A673 (cell line): ENCODE measurements at regions of chr2 and their contacts with region 1.

Region 1: DNA sequence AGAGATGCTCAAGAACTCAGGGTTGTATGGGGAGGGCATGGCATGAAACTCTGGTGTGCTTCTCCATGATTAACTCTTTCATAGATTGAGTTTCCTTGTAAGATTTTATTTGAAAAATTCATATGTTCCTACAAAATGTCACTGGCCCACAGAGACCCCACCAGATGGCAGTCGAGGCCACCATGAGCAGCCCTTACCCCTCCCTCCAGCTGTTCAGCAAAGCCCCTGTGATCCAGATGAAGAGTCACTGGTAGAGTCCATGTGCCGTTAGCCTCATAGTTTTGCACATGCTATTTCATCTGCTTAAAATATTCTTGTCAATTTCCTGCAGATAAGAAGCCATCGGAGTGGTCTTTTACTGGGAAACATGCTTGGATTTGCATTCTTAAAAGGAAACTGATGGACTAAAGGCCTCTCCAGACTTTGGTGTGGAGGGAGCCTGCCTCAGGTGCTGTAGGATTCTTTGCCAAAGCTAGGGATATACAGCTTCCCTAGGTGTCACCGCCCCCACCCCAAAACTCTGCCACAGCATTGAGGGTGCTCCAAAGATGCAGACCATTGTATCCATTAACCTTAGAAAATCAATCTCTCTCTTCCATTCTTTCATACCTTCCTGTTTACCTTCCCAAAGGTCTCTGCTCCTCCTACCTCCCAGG is 18.8 kb downstream of the ZNF385B start:
- DNase-seq: peak; percentile 62
- H3K4me3 ChIP-seq: no peak overlapping the region
- H3K27ac ChIP-seq: no peak overlapping the region
- H3K4me1 ChIP-seq: no peaks in the 10 kb centered on the region
- H3K27me3 ChIP-seq: peaks cover 4% of the 10 kb centered on the region
- CTCF ChIP-seq: peak; percentile 70

Region 2: GRCh38 chr2:179796213-179797007 is 46.2 kb before region 1 on chr2:
- CTCF ChIA-PET with region 1: no interaction called
- POLR2A ChIA-PET with region 1: no interaction called
- intact Hi-C with region 1: no loop called
- DNase-seq: no peak
- H3K4me3 ChIP-seq: no peak overlapping the region
- H3K27ac ChIP-seq: no peak overlapping the region
- H3K4me1 ChIP-seq: no peaks in the 10 kb centered on the region
- H3K27me3 ChIP-seq: peaks cover 6% of the 10 kb centered on the region
- CTCF ChIP-seq: no peak

Region 3: DNA sequence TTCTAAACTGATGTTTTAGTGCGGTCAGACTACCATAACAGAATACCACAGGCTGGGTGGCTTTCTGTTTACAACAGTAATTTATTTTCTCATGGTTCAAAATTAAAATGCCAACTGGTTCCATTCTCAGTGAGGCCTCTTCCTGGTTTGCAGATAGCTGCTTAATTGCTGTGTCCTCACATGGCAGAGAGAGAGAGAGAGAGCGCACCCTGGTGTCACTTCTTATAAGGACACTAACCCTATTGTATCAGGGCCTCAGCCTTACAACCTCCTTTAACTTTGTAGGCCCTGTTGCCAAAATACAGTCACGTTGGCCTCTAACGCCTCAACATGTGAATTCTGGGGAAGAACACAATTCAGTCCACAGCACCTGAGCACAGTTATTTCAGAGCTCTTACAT is 56.2 kb after region 1 on chr2:
- CTCF ChIA-PET with region 1: interaction called, 3 read pairs
- POLR2A ChIA-PET with region 1: no interaction called
- intact Hi-C with region 1: loop called (anchors 5 kb)
- DNase-seq: peak; percentile 70
- H3K4me3 ChIP-seq: no peak overlapping the region
- H3K27ac ChIP-seq: no peak overlapping the region
- H3K4me1 ChIP-seq: no peaks in the 10 kb centered on the region
- H3K27me3 ChIP-seq: no peaks in the 10 kb centered on the region
- CTCF ChIP-seq: peak; percentile 69

Region 4: GRCh38 chr2:179952658-179953057 is 110.0 kb after region 1 on chr2:
- CTCF ChIA-PET with region 1: no interaction called
- POLR2A ChIA-PET with region 1: no interaction called
- intact Hi-C with region 1: no loop called
- DNase-seq: no peak
- H3K4me3 ChIP-seq: no peak overlapping the region
- H3K27ac ChIP-seq: no peak overlapping the region
- H3K4me1 ChIP-seq: no peaks in the 10 kb centered on the region
- H3K27me3 ChIP-seq: no peaks in the 10 kb centered on the region
- CTCF ChIP-seq: no peak